PC-3 (cell line): ENCODE measurements at regions of chr1 and their contacts with region 1.

Region 1: GRCh38 chr1:204128964-204129896 is 22.6 kb downstream of the ETNK2 start:
- DNase-seq: peak; percentile 77
- ATAC-seq: peak; percentile 44
- H3K4me3 ChIP-seq: peak overlapping the region; percentile 46
- H3K27ac ChIP-seq: peak overlapping the region; percentile 55
- H3K4me1 ChIP-seq: peaks cover 57% of the 10 kb centered on the region
- H3K27me3 ChIP-seq: no peaks in the 10 kb centered on the region
- CTCF ChIP-seq: peak; percentile 88

Region 2: GRCh38 chr1:203861379-203862184 is 267.6 kb before region 1 on chr1 and contains the start of gene SNRPE:
- CTCF ChIA-PET with region 1: interaction called, 27 read pairs
- POLR2A ChIA-PET with region 1: no interaction called
- intact Hi-C with region 1: loop called (anchors 1 kb)
- DNase-seq: peak; percentile 99
- ATAC-seq: peak; percentile 86
- H3K4me3 ChIP-seq: peak within 1 kb of the TSS; percentile 91
- H3K27ac ChIP-seq: peak within 1 kb of the TSS; percentile 82
- H3K4me1 ChIP-seq: peaks cover 36% of the 10 kb centered on the region
- H3K27me3 ChIP-seq: no peaks in the 10 kb centered on the region
- CTCF ChIP-seq: peak; percentile 88
- total RNA-seq, gene SNRPE: 167 and 187 TPM in 2 replicates

Region 3: DNA sequence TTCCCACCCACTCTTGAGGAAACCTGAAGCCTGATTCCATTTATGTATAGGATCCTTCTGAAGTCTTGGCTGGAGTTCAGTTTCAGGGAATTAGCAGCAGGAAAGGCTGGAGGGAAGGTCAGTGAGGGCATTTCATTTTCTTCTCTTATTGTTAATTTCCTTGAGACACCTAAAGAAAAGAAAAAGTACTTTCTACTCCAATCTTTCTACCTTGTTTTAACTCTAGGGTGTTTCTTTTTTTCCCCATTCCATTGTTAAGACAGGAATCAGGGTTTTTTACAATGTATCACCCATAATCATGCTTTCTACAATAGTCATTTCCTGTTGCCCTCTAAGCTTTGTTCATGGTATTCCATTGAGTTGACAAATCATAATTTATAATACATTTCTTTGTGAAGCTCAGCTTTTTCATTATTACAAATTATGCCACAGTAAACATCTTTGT is 240.4 kb before region 1 on chr1:
- CTCF ChIA-PET with region 1: no interaction called
- POLR2A ChIA-PET with region 1: no interaction called
- intact Hi-C with region 1: loop called (anchors 1 kb)
- DNase-seq: peak; percentile 86
- ATAC-seq: peak; percentile 90
- H3K4me3 ChIP-seq: peak overlapping the region; percentile 53
- H3K27ac ChIP-seq: peak overlapping the region; percentile 86
- H3K4me1 ChIP-seq: peaks cover 20% of the 10 kb centered on the region
- H3K27me3 ChIP-seq: no peaks in the 10 kb centered on the region
- CTCF ChIP-seq: no peak

Region 4: GRCh38 chr1:204036880-204037655 is 92.2 kb before region 1 on chr1:
- CTCF ChIA-PET with region 1: no interaction called
- POLR2A ChIA-PET with region 1: no interaction called
- intact Hi-C with region 1: no loop called
- DNase-seq: no peak
- ATAC-seq: peak; percentile 48
- H3K4me3 ChIP-seq: no peak overlapping the region
- H3K27ac ChIP-seq: no peak overlapping the region
- H3K4me1 ChIP-seq: no peaks in the 10 kb centered on the region
- H3K27me3 ChIP-seq: no peaks in the 10 kb centered on the region
- CTCF ChIP-seq: peak; percentile 33; the same call in 1 of the 2 replicates

Region 5: GRCh38 chr1:204072931-204073836 is 56.0 kb before region 1 on chr1 and contains the start of gene SOX13:
- CTCF ChIA-PET with region 1: interaction called, 7 read pairs
- POLR2A ChIA-PET with region 1: no interaction called
- intact Hi-C with region 1: loop called (anchors 1 kb)
- DNase-seq: peak; percentile 89
- ATAC-seq: peak; percentile 78
- H3K4me3 ChIP-seq: peak within 1 kb of the TSS; percentile 88
- H3K27ac ChIP-seq: peak within 1 kb of the TSS; percentile 57
- H3K4me1 ChIP-seq: peaks cover 27% of the 10 kb centered on the region
- H3K27me3 ChIP-seq: no peaks in the 10 kb centered on the region
- CTCF ChIP-seq: peak; percentile 32
- total RNA-seq, gene SOX13: 81.9 and 93.1 TPM in 2 replicates

Region 6: GRCh38 chr1:204151552-204152309 is 22.5 kb after region 1 on chr1 and contains the start of gene ETNK2:
- CTCF ChIA-PET with region 1: no interaction called
- POLR2A ChIA-PET with region 1: interaction called, 4 read pairs
- intact Hi-C with region 1: loop called (anchors 2 kb)
- DNase-seq: peak; percentile 72
- ATAC-seq: peak; percentile 77
- H3K4me3 ChIP-seq: peak within 1 kb of the TSS; percentile 71
- H3K27ac ChIP-seq: no peak within 1 kb of the TSS
- H3K4me1 ChIP-seq: peaks cover 14% of the 10 kb centered on the region; the same call in 1 of the 2 replicates
- H3K27me3 ChIP-seq: no peaks in the 10 kb centered on the region
- CTCF ChIP-seq: no peak
- total RNA-seq, gene ETNK2: 24.5 and 37.1 TPM in 2 replicates

Region 7: DNA sequence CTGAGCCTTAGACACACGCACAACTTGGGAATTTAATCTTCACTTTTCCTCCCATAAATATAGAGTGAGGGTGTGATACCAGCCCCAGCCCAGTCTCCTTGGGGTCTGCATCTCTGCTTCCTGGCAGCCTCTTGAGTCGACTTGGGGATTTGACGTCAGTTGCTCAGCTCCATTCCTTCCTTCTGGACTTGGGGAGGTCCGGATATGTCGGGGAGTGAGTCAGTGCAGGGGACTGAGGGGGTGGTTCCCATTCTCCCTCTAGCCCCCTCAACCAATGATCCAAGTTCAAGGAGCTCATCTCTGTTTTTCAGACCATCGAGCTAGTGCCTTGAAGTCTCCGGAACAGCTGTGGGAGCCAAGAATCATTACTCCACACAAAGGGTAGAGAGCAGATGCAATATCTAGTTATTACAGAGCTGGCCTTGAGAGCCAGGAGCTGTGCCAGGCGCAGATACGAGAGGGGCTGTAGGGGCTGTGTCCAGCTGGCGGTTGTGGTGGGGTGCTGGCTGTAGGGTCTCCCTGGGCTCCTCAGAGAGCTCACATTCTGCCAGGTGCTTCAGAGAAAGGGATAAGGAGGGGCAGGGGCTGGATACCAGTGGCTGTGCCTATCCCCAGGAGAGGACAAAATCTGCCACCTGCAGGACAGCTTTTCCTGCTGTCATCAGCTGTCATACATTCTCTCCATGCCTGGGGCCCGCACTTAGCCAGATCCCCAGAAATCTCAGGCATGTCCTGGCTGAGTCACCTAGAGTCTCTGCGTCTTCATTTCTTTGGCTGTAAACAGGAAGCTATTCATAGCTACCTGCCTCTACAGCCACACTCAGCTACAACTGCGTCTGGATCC is 69.1 kb after region 1 on chr1:
- CTCF ChIA-PET with region 1: interaction called, 6 read pairs
- POLR2A ChIA-PET with region 1: no interaction called
- intact Hi-C with region 1: loop called (anchors 2 kb)
- DNase-seq: peak; percentile 98
- ATAC-seq: peak; percentile 95
- H3K4me3 ChIP-seq: no peak overlapping the region
- H3K27ac ChIP-seq: peak overlapping the region; percentile 73
- H3K4me1 ChIP-seq: peaks cover 32% of the 10 kb centered on the region
- H3K27me3 ChIP-seq: no peaks in the 10 kb centered on the region
- CTCF ChIP-seq: peak; percentile 74